Gastrocnemius medialis (tissue), 4 donors: ENCODE measurements at regions of chr9 and their contacts with region 1.

Region 1: DNA sequence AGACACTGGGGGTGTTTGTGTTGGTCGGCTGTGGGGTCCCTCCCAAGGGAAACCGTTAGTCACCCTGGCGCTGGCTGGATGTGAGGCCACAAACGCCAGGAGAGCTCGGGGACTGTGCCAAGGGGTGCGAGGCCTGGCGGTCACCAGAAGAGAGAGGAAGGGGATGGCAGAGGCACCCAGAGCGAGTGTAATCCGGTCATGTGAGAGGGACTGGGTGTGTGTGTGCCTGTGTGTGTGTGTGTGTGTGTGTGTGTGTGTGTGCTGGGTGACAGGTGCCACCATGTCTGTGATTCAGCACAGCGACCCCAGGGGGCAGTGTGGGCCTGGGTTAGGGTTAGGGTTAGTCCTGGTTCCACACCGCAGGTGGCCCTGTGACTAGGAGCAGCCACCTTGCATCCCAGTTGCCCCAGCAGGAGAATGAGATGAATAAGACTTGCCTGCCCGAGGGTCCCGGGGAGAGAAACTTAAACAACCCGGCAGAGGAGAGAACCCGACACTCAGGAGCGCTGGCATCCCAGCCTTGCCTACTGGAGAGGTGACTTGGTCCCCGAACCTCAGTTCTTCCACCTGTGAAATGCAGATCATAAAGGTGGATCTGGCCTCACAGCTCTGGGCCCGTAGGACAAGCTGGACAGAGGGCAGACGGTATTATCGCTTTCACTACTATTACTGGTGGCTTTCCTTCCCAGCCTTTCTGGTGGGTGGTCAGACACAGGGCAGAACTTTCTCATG is 1.4 kb upstream of the ADAMTSL2 start:
- DNase-seq: peak in 1 of 2 donors; percentile 43
- ATAC-seq: no peak
- H3K4me3 ChIP-seq: no peak overlapping the region
- H3K27ac ChIP-seq: no peak overlapping the region
- H3K4me1 ChIP-seq: peaks cover 16 to 29% of the 10 kb centered on the region in 2 donors
- H3K27me3 ChIP-seq: peaks cover 0 to 27% (median 7%) of the 10 kb centered on the region in 3 donors
- CTCF ChIP-seq: peak in 4 of 5 experiments; percentile 30 to 63 (median 42)
- POLR2A ChIP-seq: no peak

Region 2: DNA sequence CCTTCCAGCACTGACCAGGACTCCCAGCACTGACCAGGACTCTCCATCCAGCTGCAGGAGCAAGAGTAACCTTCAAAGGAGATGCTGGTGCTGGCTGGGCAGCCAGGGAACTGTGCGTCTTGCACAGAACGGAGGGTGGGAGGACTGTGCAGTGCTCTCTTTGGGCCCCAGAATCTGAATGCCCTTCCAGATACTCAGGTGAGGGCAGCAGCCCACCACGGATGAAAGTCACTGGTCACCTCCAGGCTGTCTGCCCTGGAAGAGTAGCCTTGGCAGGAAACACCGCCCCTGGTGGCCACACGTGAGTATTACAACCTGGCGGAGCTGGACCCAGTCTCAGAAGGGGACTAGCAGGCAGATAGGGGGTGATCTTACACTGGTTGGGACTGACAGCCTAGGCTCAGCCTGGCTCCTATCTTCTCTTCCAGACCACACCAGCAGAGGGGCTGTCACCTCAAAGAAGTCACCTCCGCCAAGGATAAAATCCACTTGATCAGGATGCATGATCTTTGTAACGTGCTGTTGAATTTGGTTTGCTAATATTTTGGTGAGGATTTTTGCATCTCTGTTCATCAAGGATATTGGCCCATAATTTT is 209.8 kb after region 1 on chr9:
- in situ Hi-C with region 1: loop called in 2 of 4 experiments (anchors 25 kb)
- intact Hi-C with region 1: no loop called
- DNase-seq: peak; percentile 27 to 38
- ATAC-seq: peak; percentile 73 to 90
- H3K4me3 ChIP-seq: no peak overlapping the region
- H3K27ac ChIP-seq: no peak overlapping the region
- H3K4me1 ChIP-seq: peaks cover 2 to 4% of the 10 kb centered on the region in 2 donors
- H3K27me3 ChIP-seq: peaks cover 0 to 6% (median 3%) of the 10 kb centered on the region in 3 donors
- CTCF ChIP-seq: peak; percentile 76 to 94 (median 87)
- POLR2A ChIP-seq: no peak

Region 3: DNA sequence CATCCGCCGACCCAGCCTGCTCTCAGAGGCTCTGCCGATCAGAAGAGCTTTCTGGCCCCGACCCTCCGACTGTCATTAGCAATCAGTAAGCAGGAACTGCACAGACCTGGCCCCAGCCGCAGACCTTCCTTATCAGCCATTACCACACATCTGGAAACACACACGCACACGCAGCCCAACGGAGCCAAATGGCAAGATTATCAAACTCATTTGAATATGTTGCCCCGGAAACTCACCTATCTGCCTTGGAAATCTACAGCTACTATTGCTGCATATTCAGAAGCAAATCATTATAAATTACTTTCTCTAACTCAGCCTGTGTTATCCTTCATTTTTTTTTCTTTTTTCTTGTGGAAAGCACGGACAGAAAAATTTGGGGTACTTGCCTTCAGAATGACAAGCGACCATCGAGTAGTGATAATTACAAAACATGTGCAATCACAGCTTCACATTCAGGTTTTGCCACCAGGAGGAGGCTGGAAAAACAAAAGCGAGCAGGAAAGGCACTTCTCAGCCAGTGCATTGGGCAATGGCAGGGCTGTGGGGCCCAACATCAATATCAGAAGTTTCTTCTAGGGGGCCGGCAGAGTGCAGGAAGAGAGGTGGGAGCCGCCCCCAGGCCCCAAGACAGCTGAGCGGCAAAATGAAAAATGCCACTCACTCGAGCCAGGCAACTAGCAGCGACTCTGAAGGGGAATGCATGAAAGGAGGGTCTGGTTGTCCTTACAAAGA is 336.7 kb after region 1 on chr9:
- in situ Hi-C with region 1: no loop called
- intact Hi-C with region 1: no loop called
- DNase-seq: no peak
- ATAC-seq: no peak
- H3K4me3 ChIP-seq: no peak overlapping the region
- H3K27ac ChIP-seq: no peak overlapping the region
- H3K4me1 ChIP-seq: no peaks in the 10 kb centered on the region
- H3K27me3 ChIP-seq: peaks cover 0 to 3% (median 0%) of the 10 kb centered on the region in 3 donors
- CTCF ChIP-seq: no peak
- POLR2A ChIP-seq: no peak

Region 4: GRCh38 chr9:134434894-134435506 is 901.9 kb after region 1 on chr9:
- in situ Hi-C with region 1: no loop called
- intact Hi-C with region 1: no loop called
- DNase-seq: peak; percentile 95 to 96
- ATAC-seq: peak; percentile 71 to 73
- H3K4me3 ChIP-seq: peak overlapping the region; percentile 10 to 30 (median 22)
- H3K27ac ChIP-seq: peak overlapping the region; percentile 92 to 97 (median 94)
- H3K4me1 ChIP-seq: peaks cover 87 to 88% of the 10 kb centered on the region in 2 donors
- H3K27me3 ChIP-seq: no peaks in the 10 kb centered on the region
- CTCF ChIP-seq: no peak
- POLR2A ChIP-seq: no peak